ENCODE measurements at regions of chr10 and their contacts with region 1.

Region 1: DNA sequence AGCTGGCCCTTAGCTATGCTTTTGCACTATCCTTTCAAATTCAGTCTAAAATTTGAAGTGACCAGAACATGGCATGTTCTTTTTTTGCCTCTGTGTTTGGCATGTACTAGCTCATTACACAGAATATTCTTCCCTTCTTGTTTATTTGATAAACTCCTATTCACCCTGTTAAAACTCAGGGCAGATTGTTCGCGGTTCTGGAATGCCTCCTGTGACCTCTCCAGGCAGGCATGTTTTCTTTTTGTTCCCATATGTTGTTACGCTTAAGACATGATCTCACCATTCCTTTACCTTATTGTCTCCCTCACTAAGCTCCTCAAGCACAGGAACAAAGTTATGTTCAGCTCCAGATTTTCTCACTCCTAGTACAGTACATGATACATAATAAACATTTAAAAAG is 181.7 kb downstream of the CCSER2 start:
- DNase-seq: no peak
- H3K4me3 ChIP-seq: no peak overlapping the region
- H3K27ac ChIP-seq: no peak overlapping the region
- H3K4me1 ChIP-seq: no peaks in the 10 kb centered on the region
- H3K27me3 ChIP-seq: no peaks in the 10 kb centered on the region
- CTCF ChIP-seq: no peak

Region 2: GRCh38 chr10:84499846-84500245 is 10.3 kb before region 1 on chr10:
- CTCF ChIA-PET with region 1: no interaction called
- POLR2A ChIA-PET with region 1: interaction called, 11 read pairs
- intact Hi-C with region 1: no loop called
- DNase-seq: no peak
- H3K4me3 ChIP-seq: no peak overlapping the region
- H3K27ac ChIP-seq: no peak overlapping the region
- H3K4me1 ChIP-seq: no peaks in the 10 kb centered on the region
- H3K27me3 ChIP-seq: no peaks in the 10 kb centered on the region
- CTCF ChIP-seq: no peak

Region 3: GRCh38 chr10:84876116-84876999 is 366.2 kb after region 1 on chr10:
- CTCF ChIA-PET with region 1: no interaction called
- POLR2A ChIA-PET with region 1: no interaction called
- intact Hi-C with region 1: no loop called
- DNase-seq: no peak
- H3K4me3 ChIP-seq: no peak overlapping the region
- H3K27ac ChIP-seq: no peak overlapping the region
- H3K4me1 ChIP-seq: no peaks in the 10 kb centered on the region
- H3K27me3 ChIP-seq: peaks cover 17% of the 10 kb centered on the region
- CTCF ChIP-seq: no peak